PC-3 (cell line): ENCODE measurements at regions of chr19 and their contacts with region 1.

Region 1: DNA sequence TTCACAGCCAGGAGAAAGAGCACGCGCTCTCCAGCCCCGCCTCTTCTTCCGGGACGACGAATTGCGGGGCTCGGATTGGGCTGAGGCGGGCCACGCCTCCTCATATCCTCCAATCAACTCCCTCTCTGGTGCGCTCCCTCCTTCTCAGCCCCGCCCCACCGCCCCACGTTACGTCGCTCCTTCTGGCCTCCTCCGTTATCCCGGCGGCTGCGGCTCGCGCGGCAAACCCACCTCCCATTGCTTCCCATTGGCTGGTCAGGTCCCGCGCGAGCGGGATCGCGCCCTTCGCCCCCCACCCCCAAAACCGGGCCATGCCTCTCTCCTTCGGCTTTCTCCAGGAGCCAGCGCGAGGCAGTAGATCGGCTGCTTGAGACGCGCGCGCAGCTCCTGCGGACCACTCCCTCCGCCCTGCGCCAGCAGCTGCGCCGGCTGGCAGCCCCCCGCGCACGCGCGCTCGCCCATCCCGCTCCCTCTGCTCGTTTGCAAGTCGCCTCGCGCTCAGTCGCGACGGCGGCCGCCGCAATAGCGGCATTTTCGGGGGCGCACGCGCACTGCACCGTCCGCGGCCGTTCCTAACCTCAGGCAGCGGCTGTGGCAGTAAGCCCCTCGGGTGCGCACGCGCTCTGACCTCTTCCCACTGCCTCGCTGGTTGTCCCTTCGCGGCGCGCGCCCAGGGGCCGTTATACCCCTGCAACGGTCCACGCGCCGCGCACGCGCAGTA is 512 bp upstream of the ARHGAP35 start:
- DNase-seq: peak; percentile 94
- ATAC-seq: peak; percentile 69
- H3K4me3 ChIP-seq: peak overlapping the region; percentile 77
- H3K27ac ChIP-seq: peak overlapping the region; percentile 90
- H3K4me1 ChIP-seq: peaks cover 41% of the 10 kb centered on the region
- H3K27me3 ChIP-seq: no peaks in the 10 kb centered on the region
- CTCF ChIP-seq: no peak

Region 2: GRCh38 chr19:46728693-46729676 is 131.3 kb before region 1 on chr19:
- CTCF ChIA-PET with region 1: no interaction called
- POLR2A ChIA-PET with region 1: no interaction called
- intact Hi-C with region 1: no loop called
- DNase-seq: peak; percentile 34
- ATAC-seq: no peak
- H3K4me3 ChIP-seq: no peak overlapping the region
- H3K27ac ChIP-seq: no peak overlapping the region
- H3K4me1 ChIP-seq: peaks cover 37% of the 10 kb centered on the region
- H3K27me3 ChIP-seq: no peaks in the 10 kb centered on the region
- CTCF ChIP-seq: peak; percentile 79

Region 3: DNA sequence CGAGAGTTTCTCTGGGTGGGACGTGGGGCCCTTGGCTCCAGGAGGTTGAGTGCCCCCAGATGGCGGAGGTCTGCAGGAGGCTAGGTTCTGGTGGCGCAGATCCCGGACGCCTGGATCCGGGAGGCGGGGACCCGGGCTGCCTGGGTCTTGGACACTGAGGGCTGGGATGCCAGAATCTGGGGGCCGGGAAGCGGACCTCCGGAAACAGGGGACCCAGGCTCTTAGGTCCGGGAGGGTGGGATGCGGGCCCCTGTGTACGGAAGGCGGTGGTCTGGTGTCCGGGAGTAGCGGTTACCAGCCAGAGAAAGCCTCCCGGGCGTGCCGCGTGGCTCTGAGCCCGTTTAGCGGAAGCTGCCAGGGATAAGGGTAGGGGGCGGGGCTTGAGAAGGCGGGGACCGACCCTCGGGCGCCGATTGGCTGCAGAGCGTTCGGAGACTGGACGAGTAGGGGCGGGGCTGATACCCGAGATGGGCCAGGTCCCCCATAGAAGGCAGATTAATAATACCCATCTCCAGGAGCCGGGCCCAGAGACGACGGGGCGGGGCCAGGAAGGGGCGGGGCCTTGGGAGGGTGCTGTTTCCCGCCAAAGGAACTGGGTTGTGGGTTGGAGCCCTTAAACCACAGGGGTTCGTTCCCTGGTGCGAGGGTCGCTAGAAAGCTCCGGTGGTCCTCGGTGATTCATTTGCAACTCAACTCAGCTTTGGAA is 71.9 kb before region 1 on chr19 and contains the start of gene SLC1A5:
- CTCF ChIA-PET with region 1: no interaction called
- POLR2A ChIA-PET with region 1: no interaction called
- intact Hi-C with region 1: no loop called
- DNase-seq: peak; percentile 93
- ATAC-seq: peak; percentile 59
- H3K4me3 ChIP-seq: peak within 1 kb of the TSS; percentile 91
- H3K27ac ChIP-seq: peak within 1 kb of the TSS; percentile 86
- H3K4me1 ChIP-seq: peaks cover 35% of the 10 kb centered on the region
- H3K27me3 ChIP-seq: no peaks in the 10 kb centered on the region
- CTCF ChIP-seq: no peak
- total RNA-seq, gene SLC1A5: 97.4 and 117 TPM in 2 replicates

Region 4: DNA sequence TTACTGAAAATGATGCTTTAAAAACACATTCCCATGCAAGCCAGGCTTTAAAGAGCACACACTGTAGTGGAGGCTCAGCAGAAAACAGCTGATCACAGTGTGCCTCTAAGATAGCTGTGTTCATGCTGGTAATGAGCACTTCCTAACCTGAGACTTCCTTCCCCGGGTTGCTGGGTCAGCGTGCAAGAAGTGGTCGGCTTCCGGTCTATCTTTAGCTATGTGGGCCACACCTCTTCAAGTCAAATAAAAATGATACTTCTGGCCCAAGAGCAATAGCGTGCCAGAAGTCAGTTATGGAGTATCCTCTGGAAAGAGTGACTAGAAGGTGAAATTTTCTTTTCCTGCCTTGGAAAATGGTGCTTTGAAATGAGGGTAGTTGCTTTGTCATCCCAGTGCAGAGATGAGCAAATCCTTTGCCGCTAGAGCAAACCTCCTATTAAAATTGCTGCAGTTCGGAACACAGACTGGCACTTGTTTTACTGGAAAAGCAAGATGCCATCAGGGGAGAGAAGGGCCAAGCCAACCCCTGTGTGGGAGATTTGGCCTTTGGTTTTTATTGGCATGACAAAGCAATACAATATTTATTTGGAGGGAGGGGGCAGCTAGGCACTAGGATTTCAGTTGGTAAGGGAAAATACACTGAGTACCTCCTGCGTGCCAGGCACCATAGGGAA is 64.7 kb after region 1 on chr19:
- CTCF ChIA-PET with region 1: interaction called, 6 read pairs
- POLR2A ChIA-PET with region 1: no interaction called
- intact Hi-C with region 1: loop called (anchors 10 kb)
- DNase-seq: peak; percentile 94
- ATAC-seq: peak; percentile 77
- H3K4me3 ChIP-seq: peak overlapping the region; percentile 62
- H3K27ac ChIP-seq: peak overlapping the region; percentile 99
- H3K4me1 ChIP-seq: peaks cover 50% of the 10 kb centered on the region
- H3K27me3 ChIP-seq: no peaks in the 10 kb centered on the region
- CTCF ChIP-seq: no peak

Region 5: GRCh38 chr19:46975925-46976782 is 115.9 kb after region 1 on chr19:
- CTCF ChIA-PET with region 1: interaction called, 18 read pairs
- POLR2A ChIA-PET with region 1: no interaction called
- intact Hi-C with region 1: no loop called
- DNase-seq: peak; percentile 51
- ATAC-seq: peak; percentile 64
- H3K4me3 ChIP-seq: no peak overlapping the region
- H3K27ac ChIP-seq: 0 out of 2 replicates have a peak overlapping the region, but pooled peaks have one; percentile 9
- H3K4me1 ChIP-seq: peaks cover 17% of the 10 kb centered on the region; the same call in 1 of the 2 replicates
- H3K27me3 ChIP-seq: no peaks in the 10 kb centered on the region
- CTCF ChIP-seq: no peak